Left ventricle myocardium inferior (tissue), 1 donor: ENCODE measurements at regions of chr19 and their contacts with region 1.

Region 1: GRCh38 chr19:8396563-8397203 is 6.5 kb downstream of the RAB11B start:
- DNase-seq: peak; percentile 71
- H3K4me3 ChIP-seq: no peak overlapping the region
- H3K27ac ChIP-seq: peak overlapping the region; percentile 37
- H3K4me1 ChIP-seq: peaks cover 69% of the 10 kb centered on the region
- H3K27me3 ChIP-seq: no peaks in the 10 kb centered on the region
- CTCF ChIP-seq: peak; percentile 73

Region 2: GRCh38 chr19:8355631-8356402 is 40.9 kb before region 1 on chr19:
- intact Hi-C with region 1: loop called (anchors 5 kb)
- DNase-seq: no peak
- H3K4me3 ChIP-seq: no peak overlapping the region
- H3K27ac ChIP-seq: no peak overlapping the region
- H3K4me1 ChIP-seq: peaks cover 32% of the 10 kb centered on the region
- H3K27me3 ChIP-seq: no peaks in the 10 kb centered on the region
- CTCF ChIP-seq: no peak